OCI-LY7 (cell line): ENCODE measurements at regions of chr22 and their contacts with region 1.

Region 1: DNA sequence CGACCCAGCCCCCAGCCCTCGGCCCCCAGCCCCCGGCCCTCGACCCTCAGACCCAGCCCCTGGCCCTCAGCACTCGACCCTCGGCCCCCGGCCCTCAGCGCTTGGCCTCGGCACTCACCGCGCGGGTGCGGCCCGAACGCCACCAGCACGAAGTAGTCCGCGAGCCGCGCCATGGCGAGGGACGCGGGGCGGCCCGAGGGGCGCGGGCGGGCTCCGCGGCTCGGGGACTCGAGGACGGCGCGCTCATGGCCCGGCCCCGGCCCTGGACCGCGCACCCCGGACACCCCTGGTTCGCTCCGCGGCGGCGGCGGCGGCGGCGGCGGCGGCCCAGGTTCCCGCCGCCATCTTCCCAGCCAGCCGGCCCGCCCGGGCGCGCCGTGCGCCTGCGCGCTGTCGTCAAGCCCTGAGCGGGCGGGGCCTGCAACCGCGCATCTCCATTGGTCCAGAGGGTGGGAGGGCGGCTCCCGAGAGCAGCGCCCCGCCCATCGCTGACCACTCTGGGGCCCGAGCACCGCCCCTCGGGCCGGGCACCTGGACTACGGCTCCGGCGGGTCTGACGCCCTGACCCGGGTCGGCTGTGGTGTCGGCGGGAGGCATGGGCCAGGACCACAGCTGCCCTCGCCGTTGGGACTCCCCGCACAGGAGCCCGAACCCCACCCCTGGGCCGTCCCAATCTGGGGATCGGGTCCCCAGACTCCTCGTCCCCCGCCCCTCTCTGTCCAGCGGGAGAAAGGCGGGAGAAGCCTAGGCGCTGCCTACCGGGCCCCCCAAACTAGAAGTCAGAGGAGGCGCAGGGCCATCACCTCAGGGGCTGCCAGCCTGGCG is at the start of gene SBF1:
- DNase-seq: peak; percentile 92
- H3K4me3 ChIP-seq: peak within 1 kb of the TSS; percentile 96
- H3K27ac ChIP-seq: peak within 1 kb of the TSS; percentile 95
- H3K4me1 ChIP-seq: peaks cover 46% of the 10 kb centered on the region
- CTCF ChIP-seq: no peak
- total RNA-seq, gene SBF1: 134 and 177 TPM in 2 replicates

Region 2: GRCh38 chr22:50218996-50219727 is 255.7 kb before region 1 on chr22:
- CTCF ChIA-PET with region 1: no interaction called
- POLR2A ChIA-PET with region 1: no interaction called
- intact Hi-C with region 1: no loop called
- DNase-seq: no peak
- H3K4me3 ChIP-seq: no peak overlapping the region
- H3K27ac ChIP-seq: no peak overlapping the region
- H3K4me1 ChIP-seq: no peaks in the 10 kb centered on the region
- CTCF ChIP-seq: no peak

Region 3: GRCh38 chr22:50244420-50245213 is 230.3 kb before region 1 on chr22 and contains the start of gene TUBGCP6:
- CTCF ChIA-PET with region 1: no interaction called
- POLR2A ChIA-PET with region 1: no interaction called
- intact Hi-C with region 1: loop called (anchors 10 kb)
- DNase-seq: peak; percentile 94
- H3K4me3 ChIP-seq: peak within 1 kb of the TSS; percentile 81
- H3K27ac ChIP-seq: peak within 1 kb of the TSS; percentile 62
- H3K4me1 ChIP-seq: peaks cover 42% of the 10 kb centered on the region
- CTCF ChIP-seq: 0 out of 2 replicates have a peak, but pooled peaks have one; percentile 37
- total RNA-seq, gene TUBGCP6: 52.8 and 57.7 TPM in 2 replicates